Activated B cell treated with CpG ODN at 0.5 μM for 24 hours (primary cell): ENCODE measurements at regions of chr20 and their contacts with region 1.

Region 1: DNA sequence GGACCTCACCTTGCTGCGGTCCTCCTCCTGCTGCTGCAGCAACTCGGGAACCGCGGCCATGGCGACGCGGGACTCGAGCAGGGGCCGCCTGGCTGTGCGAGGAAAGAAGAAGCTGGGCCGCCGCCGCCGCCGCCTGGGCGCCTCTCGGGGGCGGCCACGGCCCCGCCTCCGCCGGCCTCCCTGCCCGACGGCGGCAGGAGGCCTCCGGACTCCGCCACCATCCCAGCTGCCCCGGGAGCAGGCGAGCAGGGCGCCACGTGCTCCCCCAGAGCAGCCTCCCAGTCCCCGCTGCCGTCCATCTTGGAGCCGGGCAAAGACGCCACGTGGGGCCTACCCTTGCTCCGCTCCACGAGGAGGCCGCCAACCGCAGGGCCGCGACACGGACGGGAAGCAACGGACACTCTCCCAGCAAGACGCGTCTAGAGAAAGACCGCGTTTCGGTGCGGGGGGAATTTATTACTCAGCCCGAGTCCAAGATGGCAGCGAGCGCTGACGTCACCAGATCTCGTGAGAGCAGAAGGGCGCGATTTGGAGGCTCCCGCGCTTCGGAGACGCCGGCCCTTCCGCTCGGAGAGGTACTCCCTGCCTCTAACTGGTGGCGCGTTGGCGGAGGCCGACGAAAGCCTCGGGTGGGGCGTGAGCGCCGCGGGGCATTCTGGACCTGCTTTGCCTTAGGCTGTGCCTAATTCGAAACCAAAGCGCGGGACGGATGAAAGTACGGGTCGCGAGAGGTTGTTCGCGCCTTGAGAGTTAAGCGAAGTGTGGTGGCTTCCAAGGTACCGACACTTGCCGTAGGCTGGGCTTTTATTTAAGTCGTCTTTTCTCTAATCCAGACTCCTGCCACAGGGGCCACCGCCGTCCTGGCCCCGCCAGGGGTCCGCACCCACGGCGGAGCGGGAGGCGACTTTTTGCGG is at the starts of genes MGME1 and SNX5:
- DNase-seq: peak; percentile 98
- ATAC-seq: peak; percentile 83
- H3K4me3 Mint-ChIP-seq: peak within 1 kb of the TSS; percentile 97
- H3K27ac Mint-ChIP-seq: peak within 1 kb of the TSS; percentile 97
- H3K4me1 Mint-ChIP-seq: peaks cover 78% of the 10 kb centered on the region
- H3K27me3 Mint-ChIP-seq: no peaks in the 10 kb centered on the region
- CTCF ChIP-seq: no peak
- total RNA-seq, gene MGME1: 19.0 TPM in 2 replicates
- total RNA-seq, gene SNX5: 125 and 139 TPM in 2 replicates

Region 2: GRCh38 chr20:17504898-17505635 is 463.6 kb before region 1 on chr20:
- CTCF ChIA-PET with region 1: no interaction called
- POLR2A ChIA-PET with region 1: no interaction called
- intact Hi-C with region 1: loop called (anchors 1 kb)
- DNase-seq: peak; percentile 51
- ATAC-seq: peak; percentile 84
- H3K4me3 Mint-ChIP-seq: peak overlapping the region; percentile 91
- H3K27ac Mint-ChIP-seq: peak overlapping the region; percentile 85
- H3K4me1 Mint-ChIP-seq: peaks cover 9% of the 10 kb centered on the region
- H3K27me3 Mint-ChIP-seq: peaks cover 12% of the 10 kb centered on the region
- CTCF ChIP-seq: peak; percentile 56

Region 3: DNA sequence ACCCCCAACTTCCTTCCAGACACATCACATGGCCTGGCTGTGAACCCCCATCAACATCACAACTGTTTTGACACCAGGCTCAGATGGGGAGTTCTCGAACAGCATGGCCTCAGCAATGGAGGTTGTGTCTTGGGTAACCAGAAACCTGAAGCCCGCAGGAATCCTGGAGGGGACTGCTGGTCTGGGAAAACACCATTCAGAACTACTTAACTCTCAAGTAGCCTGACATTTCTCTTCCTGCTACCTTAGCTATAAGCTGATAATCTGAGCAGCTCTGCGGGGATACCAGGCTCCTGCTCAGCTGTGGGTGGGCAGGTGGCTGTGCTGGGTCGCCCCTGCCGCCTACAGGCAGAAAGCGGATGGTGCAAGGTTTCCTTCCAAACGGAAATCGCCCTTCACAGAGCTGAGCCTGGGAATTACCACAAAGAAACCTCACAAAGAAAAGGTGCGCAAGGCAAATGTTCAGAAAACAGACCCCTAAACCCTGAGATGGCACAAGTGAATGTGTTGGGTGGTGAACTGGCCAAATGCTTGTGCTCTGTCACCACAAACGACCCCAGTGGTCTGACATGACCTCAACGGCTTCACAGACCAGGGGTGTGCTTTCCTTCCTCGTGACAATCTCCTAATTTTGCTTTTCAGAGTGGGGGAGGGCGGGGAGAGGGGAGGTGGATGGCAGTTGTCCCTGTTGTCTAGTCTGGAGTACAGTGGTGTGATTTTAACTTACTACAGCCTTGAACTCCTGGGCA is 29.6 kb before region 1 on chr20:
- CTCF ChIA-PET with region 1: interaction called, 4 read pairs
- POLR2A ChIA-PET with region 1: interaction called, 20 read pairs
- intact Hi-C with region 1: loop called (anchors 2 kb)
- DNase-seq: peak; percentile 48
- ATAC-seq: peak; percentile 88
- H3K4me3 Mint-ChIP-seq: no peak overlapping the region
- H3K27ac Mint-ChIP-seq: no peak overlapping the region
- H3K4me1 Mint-ChIP-seq: peaks cover 33% of the 10 kb centered on the region
- H3K27me3 Mint-ChIP-seq: no peaks in the 10 kb centered on the region
- CTCF ChIP-seq: peak; percentile 55

Region 4: GRCh38 chr20:18005231-18006109 is 36.8 kb after region 1 on chr20:
- CTCF ChIA-PET with region 1: interaction called, 11 read pairs
- POLR2A ChIA-PET with region 1: interaction called, 11 read pairs
- intact Hi-C with region 1: loop called (anchors 1 kb)
- DNase-seq: peak; percentile 26
- ATAC-seq: peak; percentile 86
- H3K4me3 Mint-ChIP-seq: peak overlapping the region; percentile 67
- H3K27ac Mint-ChIP-seq: peak overlapping the region; percentile 81
- H3K4me1 Mint-ChIP-seq: peaks cover 33% of the 10 kb centered on the region
- H3K27me3 Mint-ChIP-seq: no peaks in the 10 kb centered on the region
- CTCF ChIP-seq: no peak

Region 5: DNA sequence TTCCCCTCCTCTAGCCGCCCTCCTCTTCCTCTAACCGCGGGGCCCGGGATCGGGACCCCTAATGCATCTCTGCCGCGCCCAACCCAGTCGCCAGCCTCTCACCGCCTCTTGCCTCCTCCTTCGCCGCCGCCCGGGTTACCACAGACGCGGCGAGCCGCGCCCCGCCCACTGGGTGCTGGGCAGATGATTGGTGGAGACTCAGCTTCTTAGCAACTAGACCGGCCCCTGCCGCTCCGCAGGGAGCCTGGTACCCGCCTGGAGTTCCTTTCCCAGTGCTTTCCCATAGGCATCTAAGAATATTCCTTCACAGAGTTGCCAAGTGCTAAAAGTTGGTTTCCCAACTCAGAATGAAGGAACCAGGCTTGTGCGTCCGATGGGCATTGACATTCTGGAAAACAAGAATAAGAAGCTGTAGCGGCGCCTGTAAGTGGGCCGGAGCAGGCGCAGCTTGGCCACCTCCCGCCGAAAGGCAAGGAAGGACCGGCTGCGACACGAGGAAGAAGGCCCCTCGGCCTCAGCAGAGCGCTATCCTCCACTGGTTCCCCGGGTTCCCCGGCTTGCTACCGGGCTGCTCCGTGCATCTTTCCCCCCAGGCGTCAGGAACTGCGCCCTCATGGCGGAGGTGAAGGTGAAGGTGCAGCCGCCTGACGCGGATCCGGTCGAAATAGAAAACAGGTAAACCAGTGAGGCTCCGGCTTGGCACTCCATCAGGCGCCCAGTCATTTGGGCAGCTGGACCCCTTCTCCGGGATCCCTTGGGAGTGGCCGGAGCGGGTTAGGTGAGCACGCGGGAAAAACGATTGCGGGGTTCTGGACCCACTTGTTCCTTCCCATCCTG is 498.5 kb after region 1 on chr20 and contains the starts of genes DZANK1 and POLR3F:
- CTCF ChIA-PET with region 1: no interaction called
- POLR2A ChIA-PET with region 1: interaction called, 6 read pairs
- intact Hi-C with region 1: loop called (anchors 1 kb)
- DNase-seq: peak; percentile 88
- ATAC-seq: peak; percentile 96
- H3K4me3 Mint-ChIP-seq: peak within 1 kb of the TSS; percentile 99
- H3K27ac Mint-ChIP-seq: peak within 1 kb of the TSS; percentile 95
- H3K4me1 Mint-ChIP-seq: peaks cover 27% of the 10 kb centered on the region
- H3K27me3 Mint-ChIP-seq: no peaks in the 10 kb centered on the region
- CTCF ChIP-seq: no peak
- total RNA-seq, gene DZANK1: 5.3 and 6.0 TPM in 2 replicates
- total RNA-seq, gene POLR3F: 13.3 and 14.5 TPM in 2 replicates

Region 6: GRCh38 chr20:18587665-18588573 is 619.3 kb after region 1 on chr20 and contains the start of gene DTD1:
- CTCF ChIA-PET with region 1: no interaction called
- POLR2A ChIA-PET with region 1: no interaction called
- intact Hi-C with region 1: loop called (anchors 1 kb)
- DNase-seq: peak; percentile 88
- ATAC-seq: peak; percentile 95
- H3K4me3 Mint-ChIP-seq: peak within 1 kb of the TSS; percentile 93
- H3K27ac Mint-ChIP-seq: peak within 1 kb of the TSS; percentile 90
- H3K4me1 Mint-ChIP-seq: peaks cover 24% of the 10 kb centered on the region
- H3K27me3 Mint-ChIP-seq: peaks cover 9% of the 10 kb centered on the region
- CTCF ChIP-seq: no peak
- total RNA-seq, gene DTD1: 26.3 and 27.5 TPM in 2 replicates